ENCODE measurements at regions of chr19 and their contacts with region 1.

Region 1: GRCh38 chr19:42081584-42082203 is 5.7 kb downstream of the ZNF574 start:
- DNase-seq: peak; percentile 82 to 95
- ATAC-seq: peak; percentile 88 to 92
- H3K4me3 ChIP-seq: no peak overlapping the region
- H3K27ac ChIP-seq: no peak overlapping the region
- H3K4me1 ChIP-seq: peaks cover 26% of the 10 kb centered on the region
- CTCF ChIP-seq: peak; percentile 70
- EP300 ChIP-seq: no peak
- POLR2A ChIP-seq: no peak
- RAD21 ChIP-seq: peak; percentile 52 to 61; a peak in 3 of 5 replicates

Region 2: DNA sequence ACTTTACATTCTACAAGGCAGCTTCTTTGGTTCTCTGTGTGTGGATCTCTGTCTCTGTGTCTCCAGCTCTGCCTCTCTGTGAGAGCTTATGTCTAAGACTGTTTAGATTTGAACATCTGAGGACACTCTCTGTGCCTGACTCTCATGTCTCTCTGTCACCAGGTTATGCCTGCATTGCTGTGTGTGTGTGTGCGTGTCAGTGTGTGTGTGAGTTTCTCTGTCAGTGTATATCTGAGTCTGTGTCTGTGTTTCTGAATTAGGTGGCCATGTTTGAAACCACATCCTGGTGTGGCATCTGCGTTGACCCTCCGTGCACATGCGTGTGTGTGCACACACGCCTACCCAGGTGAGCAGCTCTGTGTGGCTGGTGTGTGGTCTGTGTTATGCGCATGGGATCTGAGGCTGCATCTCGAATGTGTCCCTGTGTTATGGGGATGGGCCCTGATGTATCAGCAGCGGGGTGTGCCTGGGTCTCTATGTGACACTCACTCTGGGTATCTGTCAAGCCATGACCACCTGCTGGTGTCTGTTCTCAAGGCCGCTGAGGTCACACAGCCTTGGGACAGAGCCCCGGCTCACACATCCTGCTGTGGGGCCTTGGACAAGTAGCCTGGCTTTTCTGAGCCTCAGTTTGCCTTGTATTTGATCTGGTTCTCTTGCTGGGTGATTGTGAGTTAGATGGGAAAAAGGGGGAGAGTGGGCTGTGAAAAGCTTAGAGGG is 94.4 kb before region 1 on chr19:
- CTCF ChIA-PET with region 1: no interaction called
- POLR2A ChIA-PET with region 1: no interaction called
- DNase-seq: no peak
- ATAC-seq: no peak
- H3K4me3 ChIP-seq: no peak overlapping the region
- H3K27ac ChIP-seq: no peak overlapping the region
- H3K4me1 ChIP-seq: no peaks in the 10 kb centered on the region
- CTCF ChIP-seq: no peak
- EP300 ChIP-seq: no peak
- POLR2A ChIP-seq: no peak
- RAD21 ChIP-seq: no peak

Region 3: DNA sequence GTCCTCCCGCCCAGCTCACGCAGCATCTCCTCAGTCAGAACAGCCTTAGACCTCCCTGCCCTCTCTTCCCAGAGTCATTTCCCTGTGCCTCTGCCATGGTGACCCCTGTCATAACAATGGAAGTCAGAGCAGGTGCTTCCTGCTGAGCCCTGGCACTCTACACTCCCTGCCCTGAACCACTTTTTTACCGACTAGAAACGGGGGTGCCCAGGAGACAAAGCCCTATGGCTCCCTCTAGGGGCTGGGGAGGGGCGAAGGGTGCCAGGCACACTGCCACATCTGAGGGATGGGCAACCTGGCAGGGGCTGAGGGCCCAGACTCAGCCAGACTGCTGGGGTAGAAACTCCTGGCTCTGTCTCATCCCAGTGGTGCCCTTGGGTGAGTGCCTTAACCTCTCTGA is 10.7 kb after region 1 on chr19:
- CTCF ChIA-PET with region 1: interaction called, 78 read pairs
- POLR2A ChIA-PET with region 1: interaction called, 4 read pairs
- DNase-seq: peak; percentile 70 to 81
- ATAC-seq: peak; percentile 59 to 81
- H3K4me3 ChIP-seq: no peak overlapping the region
- H3K27ac ChIP-seq: peak overlapping the region in 1 of 2 experiments; percentile 11; a peak in 1 of 6 replicates
- H3K4me1 ChIP-seq: peaks cover 24% of the 10 kb centered on the region
- CTCF ChIP-seq: peak; percentile 76
- EP300 ChIP-seq: no peak
- POLR2A ChIP-seq: no peak
- RAD21 ChIP-seq: peak; percentile 56 to 82

Region 4: DNA sequence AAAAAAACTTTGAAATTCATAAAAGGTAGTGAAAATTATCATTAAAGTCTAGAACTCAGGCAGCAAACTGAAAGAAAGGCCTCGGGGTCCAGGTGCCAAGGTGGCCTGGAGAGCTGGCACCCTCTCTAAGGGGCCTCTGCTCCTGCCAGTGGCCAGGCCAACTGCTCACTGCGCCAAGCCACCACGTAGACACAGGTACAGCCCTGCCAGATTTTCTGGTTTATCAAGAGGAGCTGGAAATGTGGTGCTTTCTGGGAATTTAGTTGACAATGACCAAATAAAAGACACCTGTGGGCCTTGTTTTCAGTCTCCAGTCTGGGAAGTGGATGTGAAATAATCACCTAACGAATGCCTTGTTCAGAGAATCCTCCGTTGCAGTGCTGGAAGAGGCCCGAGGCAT is 17.1 kb after region 1 on chr19:
- CTCF ChIA-PET with region 1: interaction called, 78 read pairs
- POLR2A ChIA-PET with region 1: interaction called, 4 read pairs
- DNase-seq: no peak
- ATAC-seq: no peak
- H3K4me3 ChIP-seq: no peak overlapping the region
- H3K27ac ChIP-seq: no peak overlapping the region
- H3K4me1 ChIP-seq: no peaks in the 10 kb centered on the region
- CTCF ChIP-seq: no peak
- EP300 ChIP-seq: no peak
- POLR2A ChIP-seq: no peak
- RAD21 ChIP-seq: no peak

Region 5: DNA sequence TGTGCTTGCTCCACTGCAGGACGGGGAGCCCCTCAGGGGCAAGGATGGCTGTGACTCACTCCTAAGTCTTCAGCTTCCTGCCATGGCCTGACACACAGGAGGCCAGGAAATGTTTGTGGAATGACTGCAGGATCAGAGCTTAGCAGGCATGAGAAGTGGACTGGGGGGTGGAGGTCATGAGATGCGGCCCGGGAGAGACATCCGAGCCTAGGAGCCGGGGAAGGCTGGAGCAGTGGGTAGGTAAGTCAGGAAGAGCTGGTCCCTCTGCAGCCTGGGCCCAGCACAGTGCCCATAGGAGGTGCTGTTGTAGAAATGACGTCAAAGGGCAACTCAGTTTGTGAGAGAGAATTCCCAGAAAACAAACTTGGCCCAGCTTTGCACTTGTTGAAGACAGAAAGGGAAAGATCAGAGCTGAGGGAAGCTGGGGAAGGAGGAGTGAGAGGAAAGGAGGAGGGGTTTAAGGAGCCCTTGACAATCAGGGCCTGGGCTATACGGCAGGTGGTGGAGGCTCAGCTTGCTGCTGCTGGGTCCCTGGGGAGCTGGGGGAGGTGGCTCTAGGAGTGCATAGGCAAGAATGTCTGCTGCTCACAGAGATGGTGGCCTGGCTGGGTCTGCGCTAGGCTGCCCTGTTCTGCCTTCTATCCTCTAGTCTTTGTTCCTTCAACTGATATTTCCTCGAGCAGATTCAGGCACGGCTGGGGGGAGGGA is 32.1 kb after region 1 on chr19:
- CTCF ChIA-PET with region 1: interaction called, 47 read pairs
- POLR2A ChIA-PET with region 1: no interaction called
- DNase-seq: peak; percentile 88 to 97
- ATAC-seq: peak; percentile 75 to 90
- H3K4me3 ChIP-seq: no peak overlapping the region
- H3K27ac ChIP-seq: peak overlapping the region; percentile 57 to 75
- H3K4me1 ChIP-seq: peaks cover 28% of the 10 kb centered on the region
- CTCF ChIP-seq: peak; percentile 55
- EP300 ChIP-seq: no peak
- POLR2A ChIP-seq: no peak
- RAD21 ChIP-seq: no peak